GM12878 (cell line): ENCODE measurements at regions of chr7 and their contacts with region 1.

Region 1: GRCh38 chr7:151514461-151515275 is 5.0 kb downstream of the RHEB start:
- DNase-seq: no peak
- ATAC-seq: no peak
- H3K4me3 ChIP-seq: peak overlapping the region; percentile 13; the same call in 1 of the 2 replicates
- H3K27ac ChIP-seq: no peak overlapping the region; the same call in 1 of the 2 replicates
- H3K4me1 ChIP-seq: peaks cover 4% of the 10 kb centered on the region; the same call in 1 of the 2 replicates
- H3K27me3 ChIP-seq: no peaks in the 10 kb centered on the region
- CTCF ChIP-seq: no peak
- EP300 ChIP-seq: no peak
- POLR2A ChIP-seq: no peak
- RAD21 ChIP-seq: no peak

Region 2: GRCh38 chr7:151503902-151504714 is 10.6 kb before region 1 on chr7:
- CTCF ChIA-PET with region 1: interaction called, 12 read pairs
- POLR2A ChIA-PET with region 1: interaction called, 10 read pairs
- RAD21 ChIA-PET with region 1: interaction called, 9 read pairs
- SMC1A ChIA-PET with region 1: interaction called, 10 read pairs
- in situ Hi-C with region 1: no loop called
- intact Hi-C with region 1: no loop called
- DNase-seq: no peak
- ATAC-seq: no peak
- H3K4me3 ChIP-seq: no peak overlapping the region
- H3K27ac ChIP-seq: no peak overlapping the region
- H3K4me1 ChIP-seq: peaks cover 7% of the 10 kb centered on the region
- H3K27me3 ChIP-seq: no peaks in the 10 kb centered on the region
- CTCF ChIP-seq: no peak
- EP300 ChIP-seq: no peak
- POLR2A ChIP-seq: no peak
- RAD21 ChIP-seq: no peak

Region 3: DNA sequence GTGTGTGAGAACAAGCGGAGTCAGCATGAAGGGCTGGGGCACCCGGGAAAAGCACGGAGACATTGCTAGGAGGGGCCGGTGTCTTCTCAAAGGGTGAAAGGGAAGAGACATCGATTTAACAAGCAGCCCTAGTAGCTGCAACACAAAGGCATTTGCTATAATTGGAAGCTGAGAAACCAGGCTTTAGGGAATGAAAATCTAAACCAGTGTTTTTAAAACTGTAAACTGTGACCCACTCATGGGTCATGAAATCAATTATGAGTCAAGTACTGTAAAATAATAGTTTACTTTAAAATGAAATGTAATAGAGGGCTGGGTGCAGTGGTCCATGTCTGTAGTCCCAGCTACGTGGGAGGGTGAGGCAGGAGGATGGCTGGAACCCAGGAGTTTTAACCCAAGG is 133.8 kb after region 1 on chr7:
- CTCF ChIA-PET with region 1: no interaction called
- POLR2A ChIA-PET with region 1: no interaction called
- RAD21 ChIA-PET with region 1: no interaction called
- SMC1A ChIA-PET with region 1: no interaction called
- in situ Hi-C with region 1: no loop called
- intact Hi-C with region 1: no loop called
- DNase-seq: no peak
- ATAC-seq: no peak
- H3K4me3 ChIP-seq: no peak overlapping the region
- H3K27ac ChIP-seq: no peak overlapping the region
- H3K4me1 ChIP-seq: no peaks in the 10 kb centered on the region
- H3K27me3 ChIP-seq: no peaks in the 10 kb centered on the region; a peak in 1 of 4 replicates
- CTCF ChIP-seq: no peak
- EP300 ChIP-seq: no peak
- POLR2A ChIP-seq: no peak
- RAD21 ChIP-seq: no peak